ENCODE measurements at regions of chr4 and their contacts with region 1.

Region 1: DNA sequence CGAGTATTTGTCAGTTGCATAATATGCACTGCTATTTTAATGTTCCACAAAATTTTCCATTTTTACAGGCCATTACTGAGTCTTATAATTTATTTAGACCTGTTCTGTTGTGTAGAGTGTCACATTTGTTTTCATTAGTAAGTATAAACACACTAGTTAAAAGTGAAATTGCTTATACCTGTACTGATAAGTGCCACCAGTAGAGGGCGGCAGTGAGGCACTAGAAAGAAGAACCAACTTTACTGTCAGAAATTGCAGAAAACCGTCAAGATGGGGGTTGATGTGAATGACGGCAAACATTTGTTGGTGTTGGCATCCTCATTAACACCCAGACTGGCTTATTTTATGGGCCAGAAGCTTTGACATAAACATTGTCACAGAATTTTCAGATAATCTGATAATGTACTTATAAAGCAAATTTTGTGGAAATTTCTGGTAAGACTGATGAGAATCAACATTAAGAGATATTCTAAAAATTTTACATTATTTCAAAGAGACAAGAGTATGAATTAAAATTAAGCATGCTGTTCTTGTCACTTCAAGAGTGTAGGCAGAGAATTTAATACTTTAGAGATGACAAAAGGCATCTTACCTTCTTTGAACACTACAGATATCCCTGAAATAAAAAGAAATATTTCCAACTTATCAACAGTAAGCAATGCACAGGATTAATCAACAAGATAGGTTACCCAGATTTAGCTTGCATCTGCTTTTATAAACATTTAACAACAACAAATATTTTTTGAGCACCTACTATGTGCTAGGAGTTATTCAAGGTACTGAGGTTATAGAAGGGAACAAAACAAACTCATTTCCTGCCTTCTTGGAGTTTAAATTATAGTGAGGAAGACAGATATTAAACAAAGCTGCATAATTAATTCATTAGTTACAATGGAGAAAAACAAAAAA is 24.9 kb downstream of the ALPK1 start:
- DNase-seq: peak; percentile 39
- ATAC-seq: peak; percentile 73
- H3K4me3 Mint-ChIP-seq: no peak overlapping the region
- H3K27ac Mint-ChIP-seq: no peak overlapping the region
- H3K4me1 Mint-ChIP-seq: peaks cover 15% of the 10 kb centered on the region
- H3K27me3 Mint-ChIP-seq: no peaks in the 10 kb centered on the region
- CTCF ChIP-seq: peak; percentile 97

Region 2: GRCh38 chr4:112145326-112145819 is 176.7 kb before region 1 on chr4 and contains the start of gene FAM241A:
- CTCF ChIA-PET with region 1: no interaction called
- POLR2A ChIA-PET with region 1: no interaction called
- intact Hi-C with region 1: loop called (anchors 5 kb)
- DNase-seq: peak; percentile 86
- ATAC-seq: peak; percentile 97
- H3K4me3 Mint-ChIP-seq: peak within 1 kb of the TSS; percentile 97
- H3K27ac Mint-ChIP-seq: peak within 1 kb of the TSS; percentile 80
- H3K4me1 Mint-ChIP-seq: peaks cover 19% of the 10 kb centered on the region
- H3K27me3 Mint-ChIP-seq: peaks cover 5% of the 10 kb centered on the region
- CTCF ChIP-seq: no peak
- total RNA-seq, gene FAM241A: 1.1 and 1.5 TPM in 2 replicates

Region 3: DNA sequence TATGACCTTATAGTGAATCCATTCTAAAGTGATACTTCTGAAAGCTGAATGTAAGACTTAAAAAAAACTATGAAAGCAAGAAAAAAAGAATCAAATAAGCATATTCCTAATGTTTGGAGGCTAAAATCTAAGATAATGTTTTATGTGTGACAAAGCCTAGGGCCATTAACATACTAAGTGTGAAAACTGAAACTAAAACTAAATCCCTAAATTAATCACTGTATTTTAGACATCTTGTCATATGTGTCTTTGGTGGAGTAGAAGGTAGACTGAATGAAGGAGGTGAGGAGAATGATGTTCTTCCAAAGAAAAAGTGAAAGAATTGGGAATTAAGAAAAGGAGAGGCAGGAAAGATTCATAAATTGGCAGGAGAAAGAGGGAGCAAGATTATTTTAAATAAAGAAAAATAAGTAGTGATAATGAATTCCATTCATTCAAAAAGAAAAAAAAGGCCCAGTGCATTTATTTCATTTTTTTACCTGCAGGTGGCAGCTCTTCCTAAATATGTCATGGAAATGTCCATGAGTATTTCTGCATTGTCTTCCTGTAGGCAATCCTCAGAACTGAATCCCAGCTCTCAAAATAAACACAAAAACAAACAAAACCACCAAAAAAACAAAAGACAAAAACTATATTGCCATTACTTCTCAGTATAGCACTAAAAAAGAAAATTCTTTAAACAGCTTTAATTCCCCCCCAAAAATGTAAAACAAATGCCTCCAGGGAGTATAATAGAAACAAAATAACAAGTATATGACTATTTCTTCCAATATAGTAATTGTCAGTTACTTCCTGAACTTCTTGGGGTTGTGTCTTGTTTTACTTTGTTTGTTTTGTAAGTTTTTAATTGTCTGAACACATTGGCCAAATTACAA is 107.4 kb before region 1 on chr4:
- CTCF ChIA-PET with region 1: interaction called, 3 read pairs
- POLR2A ChIA-PET with region 1: no interaction called
- intact Hi-C with region 1: loop called (anchors 1 kb)
- DNase-seq: no peak
- ATAC-seq: no peak
- H3K4me3 Mint-ChIP-seq: no peak overlapping the region
- H3K27ac Mint-ChIP-seq: no peak overlapping the region
- H3K4me1 Mint-ChIP-seq: no peaks in the 10 kb centered on the region
- H3K27me3 Mint-ChIP-seq: no peaks in the 10 kb centered on the region
- CTCF ChIP-seq: peak; percentile 17

Region 4: GRCh38 chr4:112279025-112279881 is 42.8 kb before region 1 on chr4:
- CTCF ChIA-PET with region 1: interaction called, 5 read pairs
- POLR2A ChIA-PET with region 1: interaction called, 3 read pairs
- intact Hi-C with region 1: loop called (anchors 1 kb)
- DNase-seq: no peak
- ATAC-seq: peak; percentile 57
- H3K4me3 Mint-ChIP-seq: peak overlapping the region; percentile 80
- H3K27ac Mint-ChIP-seq: peak overlapping the region; percentile 82
- H3K4me1 Mint-ChIP-seq: peaks cover 77% of the 10 kb centered on the region
- H3K27me3 Mint-ChIP-seq: no peaks in the 10 kb centered on the region
- CTCF ChIP-seq: no peak

Measured in activated B cell treated with CpG ODN at 0.5 μM for 24 hours (primary cell).